CD4-positive, alpha-beta T cell (primary cell): ENCODE measurements at regions of chr15 and their contacts with region 1.

Region 1: GRCh38 chr15:40941528-40942336 is 11.5 kb upstream of the CHAC1 start:
- DNase-seq: peak; percentile 24 to 85 (median 62)
- ATAC-seq: peak; percentile 62
- H3K4me3 ChIP-seq: peak overlapping the region; percentile 80
- H3K4me3 Mint-ChIP-seq: peak overlapping the region; percentile 79
- H3K27ac ChIP-seq: peak overlapping the region; percentile 51 to 58
- H3K27ac Mint-ChIP-seq: peak overlapping the region; percentile 69
- H3K4me1 ChIP-seq: peaks cover 38% of the 10 kb centered on the region
- H3K4me1 Mint-ChIP-seq: peaks cover 31% of the 10 kb centered on the region
- H3K27me3 ChIP-seq: no peaks in the 10 kb centered on the region
- H3K27me3 Mint-ChIP-seq: no peaks in the 10 kb centered on the region
- CTCF ChIP-seq: no peak

Region 2: GRCh38 chr15:40952901-40953712 is 11.4 kb after region 1 on chr15 and contains the start of gene CHAC1:
- CTCF ChIA-PET with region 1: interaction called, 37 read pairs
- POLR2A ChIA-PET with region 1: interaction called, 55 read pairs
- intact Hi-C with region 1: loop called (anchors 1 kb)
- DNase-seq: peak; percentile 87 to 98 (median 93)
- ATAC-seq: peak; percentile 96
- H3K4me3 ChIP-seq: peak within 1 kb of the TSS; percentile 81
- H3K4me3 Mint-ChIP-seq: peak within 1 kb of the TSS; percentile 96
- H3K27ac ChIP-seq: no peak within 1 kb of the TSS
- H3K27ac Mint-ChIP-seq: peak within 1 kb of the TSS; percentile 82
- H3K4me1 ChIP-seq: peaks cover 18% of the 10 kb centered on the region
- H3K4me1 Mint-ChIP-seq: peaks cover 10% of the 10 kb centered on the region
- H3K27me3 ChIP-seq: peaks cover 0 to 4% of the 10 kb centered on the region in 2 experiments
- H3K27me3 Mint-ChIP-seq: no peaks in the 10 kb centered on the region
- CTCF ChIP-seq: peak; percentile 20
- total RNA-seq, gene CHAC1: 0.42 to 0.47 TPM